ENCODE measurements at regions of chr20 and their contacts with region 1.

Region 1: DNA sequence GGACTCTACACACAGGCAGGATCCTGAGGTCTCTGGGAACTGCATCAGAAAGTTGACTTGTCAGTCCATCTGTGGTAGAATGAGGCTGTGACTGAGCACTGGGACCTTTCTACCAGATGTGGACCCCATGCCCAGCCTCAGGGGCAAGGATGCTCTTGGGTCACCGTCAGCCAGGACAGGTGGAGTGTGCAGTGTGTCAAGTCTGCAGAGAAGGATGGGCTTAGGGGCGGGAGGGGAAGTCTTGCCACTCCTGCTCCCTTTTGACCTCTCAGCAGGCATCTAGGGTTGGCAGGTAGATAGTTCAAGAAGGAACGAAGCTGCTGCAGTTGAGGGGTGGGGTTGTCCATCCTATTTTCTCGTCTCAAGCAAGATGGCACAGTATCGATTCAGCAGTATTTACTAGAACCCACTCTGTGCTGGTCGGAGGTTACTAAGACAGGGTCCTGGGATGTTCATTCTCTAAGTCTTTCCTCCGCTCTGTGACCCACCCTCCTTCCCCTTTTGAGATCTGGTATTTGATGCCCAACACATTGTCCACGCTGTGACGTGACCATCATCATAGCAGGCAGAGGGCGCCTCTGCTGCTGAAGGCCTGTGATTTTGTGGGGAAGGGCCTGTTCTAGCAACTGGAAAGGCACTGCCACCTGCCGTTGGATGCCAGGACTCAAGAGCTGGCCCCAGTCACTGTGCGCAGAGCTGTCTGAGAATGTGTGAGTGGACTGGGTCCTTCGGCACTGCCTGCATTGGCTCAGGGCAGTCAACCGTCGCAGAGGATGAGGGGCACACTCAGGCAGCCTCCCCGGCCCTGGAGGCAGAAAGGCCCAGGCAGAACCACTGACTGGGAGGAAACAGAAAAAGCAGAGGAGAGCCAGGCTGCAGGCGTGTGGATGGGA is 23.2 kb downstream of the RBCK1 start:
- DNase-seq: peak in 1 of 2 donors; percentile 71
- H3K4me3 ChIP-seq: no peak overlapping the region
- H3K27ac ChIP-seq: no peak overlapping the region
- H3K4me1 ChIP-seq: no peaks in the 10 kb centered on the region
- H3K27me3 ChIP-seq: no peaks in the 10 kb centered on the region
- CTCF ChIP-seq: peak; percentile 40 to 61 (median 43)

Region 2: DNA sequence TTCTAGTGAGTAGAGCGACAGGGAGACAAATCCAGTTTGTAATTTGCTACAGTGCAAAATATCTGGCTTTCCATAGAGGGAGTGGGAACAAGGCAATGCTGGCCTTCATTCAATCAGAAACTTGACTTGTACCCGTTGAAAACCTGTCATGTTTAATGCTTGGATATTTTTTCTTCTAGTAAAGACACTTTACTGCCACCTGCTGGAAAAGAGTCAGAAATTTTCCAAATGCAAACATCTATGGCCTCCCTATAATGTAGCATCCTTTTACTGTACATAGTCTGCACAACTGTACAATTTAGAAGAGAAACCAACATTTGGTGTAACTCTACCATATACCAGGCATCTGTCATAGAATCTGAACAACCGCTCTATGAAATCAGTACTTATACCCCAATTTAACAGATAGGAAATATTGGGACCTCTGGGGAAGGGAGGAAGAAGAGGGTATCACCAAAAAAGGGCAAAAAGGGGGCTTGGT is 47.7 kb after region 1 on chr20:
- intact Hi-C with region 1: loop called (anchors 5 kb)
- DNase-seq: no peak
- H3K4me3 ChIP-seq: no peak overlapping the region
- H3K27ac ChIP-seq: no peak overlapping the region
- H3K4me1 ChIP-seq: peaks cover 0 to 7% of the 10 kb centered on the region in 2 donors
- H3K27me3 ChIP-seq: no peaks in the 10 kb centered on the region
- CTCF ChIP-seq: peak; percentile 39 to 64 (median 49)